MCF 10A (cell line): ENCODE measurements at regions of chr3 and their contacts with region 1.

Region 1: GRCh38 chr3:101229681-101230080 is 90.7 kb downstream of the IMPG2 start:
- DNase-seq: peak; percentile 20
- H3K4me3 Mint-ChIP-seq: no peak overlapping the region
- H3K27ac Mint-ChIP-seq: no peak overlapping the region
- H3K4me1 Mint-ChIP-seq: no peaks in the 10 kb centered on the region
- H3K27me3 Mint-ChIP-seq: no peaks in the 10 kb centered on the region
- CTCF ChIP-seq: peak; percentile 19

Region 2: GRCh38 chr3:101635954-101636798 is 406.5 kb after region 1 on chr3:
- CTCF ChIA-PET with region 1: no interaction called
- POLR2A ChIA-PET with region 1: no interaction called
- intact Hi-C with region 1: loop called (anchors 5 kb)
- DNase-seq: peak; percentile 71
- H3K4me3 Mint-ChIP-seq: no peak overlapping the region
- H3K27ac Mint-ChIP-seq: no peak overlapping the region
- H3K4me1 Mint-ChIP-seq: peaks cover 5% of the 10 kb centered on the region
- H3K27me3 Mint-ChIP-seq: no peaks in the 10 kb centered on the region
- CTCF ChIP-seq: peak; percentile 49